ENCODE measurements at regions of chr4 and their contacts with region 1.

Region 1: GRCh38 chr4:75995727-75996126 is 5.0 kb upstream of the SDAD1 start:
- DNase-seq: no peak

Region 2: DNA sequence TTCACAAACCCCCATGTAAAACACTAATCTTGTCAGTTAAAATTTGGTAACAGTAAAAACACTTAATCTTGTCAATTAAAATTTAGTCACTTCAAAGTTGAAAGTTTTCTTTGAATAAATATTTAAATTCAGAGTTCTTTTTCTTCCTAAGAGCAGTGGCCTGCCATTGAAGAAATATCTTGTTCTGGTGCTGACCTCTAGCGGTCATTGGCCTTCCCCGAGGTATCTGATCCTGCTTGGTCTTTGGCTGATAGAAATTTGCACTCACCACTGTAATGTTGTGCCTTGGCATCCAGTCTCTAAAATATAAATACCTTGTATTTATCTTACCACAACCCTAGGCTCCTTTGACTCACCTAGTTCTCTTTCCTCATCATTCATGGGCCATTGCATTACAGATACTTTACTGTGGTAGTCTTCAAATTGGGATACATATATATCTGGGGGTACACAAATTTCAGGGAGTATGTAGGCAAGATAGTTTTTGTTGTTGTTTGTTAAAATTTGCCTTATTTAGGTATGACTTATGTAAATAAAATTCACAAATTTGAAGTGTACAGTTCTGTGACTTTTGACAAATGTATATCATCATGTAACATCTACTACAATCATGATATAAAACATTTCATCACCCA is 72.0 kb after region 1 on chr4:
- intact Hi-C with region 1: loop called (anchors 1 kb)
- DNase-seq: peak in 9 of 10 donors; percentile 31 to 93 (median 71)

Region 3: GRCh38 chr4:76087007-76087769 is 91.5 kb after region 1 on chr4:
- intact Hi-C with region 1: loop called (anchors 5 kb)
- DNase-seq: peak in 9 of 10 donors; percentile 45 to 94 (median 69)

Measured in posterior cingulate gyrus (tissue), 11 donors.